GM12878 (cell line): ENCODE measurements at regions of chr12 and their contacts with region 1.

Region 1: DNA sequence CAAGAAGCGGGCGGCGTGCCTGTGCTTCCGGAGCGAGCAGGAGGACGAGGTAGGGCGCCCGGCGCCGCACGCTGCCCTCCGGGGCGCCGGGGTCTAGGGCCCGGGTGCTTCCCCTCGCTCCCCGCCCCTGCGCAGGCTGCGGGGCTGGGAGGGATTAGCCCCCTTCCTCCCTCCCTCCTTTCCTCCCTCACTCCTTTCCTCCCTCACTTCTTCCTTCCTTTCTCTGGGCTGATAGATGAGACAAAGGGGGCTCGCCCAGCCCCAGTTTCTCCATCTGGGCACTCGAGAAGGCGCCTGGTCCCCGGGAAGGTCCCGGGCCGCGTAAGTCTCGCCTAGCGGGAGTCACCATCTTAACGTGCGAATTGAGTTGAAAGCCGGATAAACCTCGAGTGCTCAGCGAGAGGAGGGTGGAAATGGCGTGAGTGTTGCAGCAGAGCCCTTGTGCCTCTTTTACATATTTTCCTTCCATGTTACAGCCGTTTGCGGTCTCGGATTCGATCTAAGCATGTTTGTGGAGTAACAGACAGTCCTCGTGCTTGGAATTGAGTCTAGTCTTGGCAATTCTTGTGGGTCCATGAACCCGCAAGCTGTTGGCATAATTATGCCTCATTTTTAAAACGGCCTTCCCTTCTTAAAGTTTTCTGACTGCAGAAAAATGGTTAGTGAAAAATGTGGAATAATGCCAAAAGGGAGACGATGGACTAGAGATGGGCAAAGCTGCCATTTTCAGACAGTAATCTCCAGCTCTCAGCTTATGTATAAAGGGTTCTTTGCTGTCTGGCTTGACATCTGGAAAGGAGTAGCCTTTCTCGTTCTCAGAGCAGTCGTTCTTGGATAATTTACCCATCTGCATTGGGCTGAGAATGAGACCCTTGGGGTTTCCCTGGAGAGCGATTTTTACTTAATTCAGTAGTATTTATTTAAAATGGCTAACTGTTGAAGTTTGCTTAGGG is 924 bp downstream of the NUDT4 start:
- DNase-seq: no peak
- ATAC-seq: peak; percentile 51
- H3K4me3 ChIP-seq: peak overlapping the region; percentile 87
- H3K27ac ChIP-seq: peak overlapping the region; percentile 98
- H3K4me1 ChIP-seq: peaks cover 15% of the 10 kb centered on the region
- H3K27me3 ChIP-seq: no peaks in the 10 kb centered on the region
- CTCF ChIP-seq: no peak
- EP300 ChIP-seq: no peak
- POLR2A ChIP-seq: peak; percentile 56
- RAD21 ChIP-seq: no peak

Region 2: GRCh38 chr12:93008044-93008778 is 370.4 kb before region 1 on chr12:
- CTCF ChIA-PET with region 1: interaction called, 4 read pairs
- POLR2A ChIA-PET with region 1: interaction called, 4 read pairs
- RAD21 ChIA-PET with region 1: interaction called, 8 read pairs
- SMC1A ChIA-PET with region 1: interaction called, 19 read pairs
- in situ Hi-C with region 1: no loop called
- intact Hi-C with region 1: no loop called
- DNase-seq: no peak
- ATAC-seq: peak; percentile 92
- H3K4me3 ChIP-seq: no peak overlapping the region
- H3K27ac ChIP-seq: peak overlapping the region; percentile 45
- H3K4me1 ChIP-seq: peaks cover 36% of the 10 kb centered on the region
- H3K27me3 ChIP-seq: no peaks in the 10 kb centered on the region
- CTCF ChIP-seq: no peak
- EP300 ChIP-seq: no peak
- POLR2A ChIP-seq: no peak
- RAD21 ChIP-seq: no peak

Region 3: GRCh38 chr12:93089805-93090569 is 288.7 kb before region 1 on chr12:
- CTCF ChIA-PET with region 1: interaction called, 90 read pairs
- POLR2A ChIA-PET with region 1: interaction called, 4 read pairs
- RAD21 ChIA-PET with region 1: interaction called, 107 read pairs
- SMC1A ChIA-PET with region 1: interaction called, 102 read pairs
- in situ Hi-C with region 1: no loop called
- intact Hi-C with region 1: no loop called
- DNase-seq: no peak
- ATAC-seq: peak; percentile 81
- H3K4me3 ChIP-seq: no peak overlapping the region
- H3K27ac ChIP-seq: no peak overlapping the region
- H3K4me1 ChIP-seq: peaks cover 4% of the 10 kb centered on the region
- H3K27me3 ChIP-seq: no peaks in the 10 kb centered on the region
- CTCF ChIP-seq: no peak
- EP300 ChIP-seq: no peak
- POLR2A ChIP-seq: no peak
- RAD21 ChIP-seq: no peak

Region 4: DNA sequence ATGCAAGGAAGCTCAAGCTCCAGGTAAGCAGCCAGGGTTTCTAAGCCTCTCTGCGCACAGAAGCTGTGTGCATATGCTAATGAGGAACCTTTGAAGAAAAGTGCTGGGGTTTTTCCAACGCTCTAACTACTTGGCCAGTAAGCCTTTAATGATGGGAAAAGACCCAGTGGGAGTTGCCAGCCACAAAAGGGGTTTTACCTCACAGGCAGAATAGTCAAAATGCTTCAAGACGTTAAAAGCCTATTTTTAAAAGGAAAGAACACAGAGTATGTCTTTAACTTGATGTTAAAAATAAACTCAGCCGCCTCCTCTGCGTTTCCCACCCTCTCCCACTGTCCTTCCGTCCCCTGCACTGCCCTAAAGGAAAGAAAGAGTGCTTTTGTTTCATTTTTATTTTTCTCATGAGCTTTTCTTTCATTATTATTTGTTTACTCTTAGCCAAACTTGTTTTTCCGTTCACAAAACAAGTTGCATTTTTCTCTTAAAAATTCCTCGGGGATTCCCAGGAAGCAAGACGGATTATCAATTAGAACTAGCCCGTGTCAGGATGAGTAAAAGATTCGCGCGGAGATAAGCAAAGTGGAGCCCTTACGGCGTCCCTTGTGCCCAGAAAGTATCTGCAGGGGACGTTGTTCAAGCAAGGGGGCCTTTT is 210.7 kb before region 1 on chr12:
- CTCF ChIA-PET with region 1: interaction called, 31 read pairs
- POLR2A ChIA-PET with region 1: interaction called, 18 read pairs
- RAD21 ChIA-PET with region 1: interaction called, 42 read pairs
- SMC1A ChIA-PET with region 1: interaction called, 63 read pairs
- in situ Hi-C with region 1: no loop called
- intact Hi-C with region 1: loop called (anchors 2 kb)
- DNase-seq: peak; percentile 95
- ATAC-seq: peak; percentile 84
- H3K4me3 ChIP-seq: peak overlapping the region; percentile 69
- H3K27ac ChIP-seq: peak overlapping the region; percentile 88
- H3K4me1 ChIP-seq: peaks cover 32% of the 10 kb centered on the region
- H3K27me3 ChIP-seq: no peaks in the 10 kb centered on the region
- CTCF ChIP-seq: no peak
- EP300 ChIP-seq: peak; percentile 78 to 87; a peak in 3 of 4 replicates
- POLR2A ChIP-seq: no peak
- RAD21 ChIP-seq: peak; percentile 23; the same call in 1 of the 2 replicates

Region 5: GRCh38 chr12:93297032-93297431 is 81.6 kb before region 1 on chr12:
- CTCF ChIA-PET with region 1: no interaction called
- POLR2A ChIA-PET with region 1: interaction called, 3 read pairs
- RAD21 ChIA-PET with region 1: interaction called, 19 read pairs
- SMC1A ChIA-PET with region 1: interaction called, 11 read pairs
- in situ Hi-C with region 1: no loop called
- intact Hi-C with region 1: loop called (anchors 5 kb)
- DNase-seq: peak; percentile 75
- ATAC-seq: peak; percentile 95
- H3K4me3 ChIP-seq: peak overlapping the region; percentile 25
- H3K27ac ChIP-seq: peak overlapping the region; percentile 73
- H3K4me1 ChIP-seq: peaks cover 17% of the 10 kb centered on the region
- H3K27me3 ChIP-seq: no peaks in the 10 kb centered on the region
- CTCF ChIP-seq: no peak
- EP300 ChIP-seq: no peak
- POLR2A ChIP-seq: no peak
- RAD21 ChIP-seq: 0 out of 2 replicates have a peak, but pooled peaks have one; percentile 13

Region 6: DNA sequence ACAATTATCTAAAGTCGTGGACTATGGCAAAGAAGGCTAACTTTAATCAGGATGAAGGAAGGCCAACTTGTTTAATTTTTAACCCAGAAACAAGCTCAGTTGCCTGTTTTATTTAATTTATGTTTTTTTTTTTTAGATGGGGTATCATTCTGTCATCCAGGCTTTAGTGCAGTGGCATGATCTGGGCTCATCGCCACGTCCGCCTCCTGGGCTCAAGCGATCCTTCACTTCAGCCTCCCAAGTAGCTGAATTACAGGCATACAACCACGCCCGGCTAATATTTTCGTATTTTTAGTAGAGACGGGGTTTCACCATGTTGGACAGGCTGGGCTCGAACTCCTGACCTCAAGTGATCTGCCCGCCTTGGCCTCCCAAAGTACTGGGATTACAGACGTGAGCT is 18.8 kb after region 1 on chr12:
- CTCF ChIA-PET with region 1: interaction called, 52 read pairs
- POLR2A ChIA-PET with region 1: interaction called, 8 read pairs
- RAD21 ChIA-PET with region 1: interaction called, 37 read pairs
- SMC1A ChIA-PET with region 1: interaction called, 53 read pairs
- in situ Hi-C with region 1: no loop called
- intact Hi-C with region 1: no loop called
- DNase-seq: no peak
- ATAC-seq: no peak
- H3K4me3 ChIP-seq: no peak overlapping the region
- H3K27ac ChIP-seq: no peak overlapping the region
- H3K4me1 ChIP-seq: no peaks in the 10 kb centered on the region; the same call in 1 of the 2 replicates
- H3K27me3 ChIP-seq: no peaks in the 10 kb centered on the region
- CTCF ChIP-seq: no peak
- EP300 ChIP-seq: no peak
- POLR2A ChIP-seq: no peak
- RAD21 ChIP-seq: no peak